ENCODE measurements at regions of chr12 and their contacts with region 1.

Region 1: GRCh38 chr12:6873094-6874014 is at the start of gene SPSB2:
- DNase-seq: peak; percentile 98
- ATAC-seq: peak; percentile 89
- H3K4me3 ChIP-seq: peak within 1 kb of the TSS; percentile 69 to 92 (median 88)
- H3K4me3 Mint-ChIP-seq: peak within 1 kb of the TSS; percentile 90
- H3K27ac ChIP-seq: peak within 1 kb of the TSS; percentile 45 to 61
- H3K27ac Mint-ChIP-seq: peak within 1 kb of the TSS; percentile 93
- H3K4me1 ChIP-seq: peaks cover 29 to 40% of the 10 kb centered on the region in 2 donors
- H3K4me1 Mint-ChIP-seq: peaks cover 40% of the 10 kb centered on the region
- H3K27me3 ChIP-seq: no peaks in the 10 kb centered on the region
- H3K27me3 Mint-ChIP-seq: no peaks in the 10 kb centered on the region
- CTCF ChIP-seq: no peak
- total RNA-seq, gene SPSB2: 13.5 and 16.0 TPM in 2 replicates

Region 2: GRCh38 chr12:6524648-6525047 is 348.7 kb before region 1 on chr12:
- CTCF ChIA-PET with region 1: no interaction called
- POLR2A ChIA-PET with region 1: no interaction called
- intact Hi-C with region 1: no loop called
- DNase-seq: no peak
- ATAC-seq: no peak
- H3K4me3 ChIP-seq: no peak overlapping the region
- H3K4me3 Mint-ChIP-seq: no peak overlapping the region
- H3K27ac ChIP-seq: no peak overlapping the region
- H3K27ac Mint-ChIP-seq: no peak overlapping the region
- H3K4me1 ChIP-seq: no peaks in the 10 kb centered on the region
- H3K4me1 Mint-ChIP-seq: no peaks in the 10 kb centered on the region
- H3K27me3 ChIP-seq: no peaks in the 10 kb centered on the region
- H3K27me3 Mint-ChIP-seq: no peaks in the 10 kb centered on the region
- CTCF ChIP-seq: no peak

Region 3: DNA sequence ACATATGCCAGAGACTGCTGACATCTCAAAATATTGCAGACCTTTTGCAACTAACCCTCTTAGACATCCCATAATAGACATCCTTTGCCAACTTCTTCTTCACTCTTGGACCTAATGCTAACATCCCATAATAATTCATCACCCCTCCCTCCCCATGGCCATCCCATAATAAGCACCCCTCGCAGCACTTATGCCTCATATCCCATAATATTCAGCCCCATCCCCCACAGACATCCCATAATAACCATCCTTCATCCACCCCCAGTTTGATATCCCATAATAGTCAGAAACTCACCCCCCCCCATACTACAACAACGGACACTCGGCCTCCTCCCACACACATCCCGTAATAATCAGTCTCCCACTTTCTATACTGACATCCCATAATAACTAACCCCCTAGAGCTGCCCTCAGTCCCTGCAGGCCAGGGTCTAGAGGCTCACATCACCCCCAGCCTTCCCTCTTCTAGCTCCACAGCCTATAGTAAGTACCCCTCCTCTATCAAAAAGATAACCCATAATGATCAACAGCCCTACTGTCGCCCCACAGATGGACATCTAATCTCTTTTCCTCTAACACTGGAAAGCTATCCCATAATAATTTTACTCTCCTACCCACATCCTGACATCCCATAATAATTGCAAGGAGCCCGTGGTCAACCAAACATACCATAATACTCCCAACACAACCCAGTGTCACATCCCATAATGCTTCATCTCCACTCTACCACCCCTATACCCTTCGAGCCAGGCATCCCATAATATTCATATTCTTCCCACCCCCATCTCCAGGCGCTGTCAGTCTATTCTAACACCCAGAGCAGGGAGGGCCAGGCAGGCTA is 265.4 kb before region 1 on chr12:
- CTCF ChIA-PET with region 1: no interaction called
- POLR2A ChIA-PET with region 1: no interaction called
- intact Hi-C with region 1: no loop called
- DNase-seq: peak; percentile 90
- ATAC-seq: peak; percentile 20
- H3K4me3 ChIP-seq: no peak overlapping the region
- H3K4me3 Mint-ChIP-seq: no peak overlapping the region
- H3K27ac ChIP-seq: peak overlapping the region; percentile 90 to 95
- H3K27ac Mint-ChIP-seq: no peak overlapping the region
- H3K4me1 ChIP-seq: peaks cover 56 to 63% of the 10 kb centered on the region in 2 donors
- H3K4me1 Mint-ChIP-seq: peaks cover 58% of the 10 kb centered on the region
- H3K27me3 ChIP-seq: no peaks in the 10 kb centered on the region
- H3K27me3 Mint-ChIP-seq: no peaks in the 10 kb centered on the region
- CTCF ChIP-seq: no peak

Region 4: DNA sequence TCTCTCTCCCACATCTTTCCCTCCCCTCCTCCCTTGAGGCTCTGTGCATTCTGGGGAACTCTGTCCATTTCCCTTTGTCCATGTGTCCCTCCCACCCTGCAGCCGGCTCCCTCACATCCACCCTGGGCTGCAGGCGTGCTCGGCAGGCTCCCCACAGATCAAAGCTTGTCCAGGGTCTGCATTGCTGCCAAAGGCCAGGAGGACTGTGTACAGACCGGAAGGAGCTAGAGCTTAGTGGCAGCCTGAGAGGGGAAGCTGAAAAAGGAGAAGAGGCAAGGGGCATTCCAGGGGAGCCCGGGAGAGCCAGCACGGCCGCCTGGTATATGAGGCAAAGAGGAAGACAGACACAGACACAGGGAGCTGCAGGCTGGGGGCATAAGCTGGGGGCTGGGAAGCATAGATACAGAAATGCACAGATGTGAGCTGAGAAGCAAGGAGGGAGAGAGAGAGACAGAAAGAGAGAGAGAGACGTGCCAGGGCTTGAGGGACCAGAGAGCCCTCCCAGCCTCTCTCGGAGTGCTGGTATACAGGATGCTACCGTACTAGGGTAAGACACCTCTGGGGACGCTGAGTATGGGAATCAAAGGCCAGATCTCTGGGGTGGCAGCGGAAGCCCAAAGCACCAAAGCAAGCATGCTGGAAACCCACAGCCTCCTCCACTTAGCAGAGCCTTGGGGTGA is 80.7 kb before region 1 on chr12:
- CTCF ChIA-PET with region 1: no interaction called
- POLR2A ChIA-PET with region 1: no interaction called
- intact Hi-C with region 1: no loop called
- DNase-seq: peak; percentile 65
- ATAC-seq: peak; percentile 49
- H3K4me3 ChIP-seq: no peak overlapping the region
- H3K4me3 Mint-ChIP-seq: peak overlapping the region; percentile 52
- H3K27ac ChIP-seq: no peak overlapping the region
- H3K27ac Mint-ChIP-seq: peak overlapping the region; percentile 64
- H3K4me1 ChIP-seq: peaks cover 13 to 19% of the 10 kb centered on the region in 2 donors
- H3K4me1 Mint-ChIP-seq: peaks cover 13% of the 10 kb centered on the region
- H3K27me3 ChIP-seq: peaks cover 0 to 42% (median 4%) of the 10 kb centered on the region in 4 experiments
- H3K27me3 Mint-ChIP-seq: peaks cover 40% of the 10 kb centered on the region
- CTCF ChIP-seq: no peak

Region 5: DNA sequence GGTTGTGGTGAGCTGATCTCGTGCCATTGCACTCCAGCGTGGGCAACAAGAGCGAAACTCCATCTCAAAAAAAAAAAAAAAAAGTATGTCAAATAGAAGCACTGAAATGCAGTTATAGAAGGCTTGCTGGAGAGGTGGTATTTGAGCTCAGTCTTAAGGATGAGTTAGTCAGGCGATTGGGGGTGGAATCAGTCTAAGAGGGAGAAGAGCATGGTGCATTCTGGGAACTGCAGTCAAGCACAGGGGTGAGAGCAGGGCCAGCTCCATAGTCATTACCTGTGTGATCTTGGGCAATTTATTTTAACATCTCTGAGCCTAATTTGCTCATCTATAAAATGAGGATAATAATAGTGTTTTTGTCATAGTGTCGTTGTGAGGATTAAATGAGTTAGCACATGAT is 38.5 kb before region 1 on chr12:
- CTCF ChIA-PET with region 1: interaction called, 16 read pairs
- POLR2A ChIA-PET with region 1: interaction called, 3 read pairs
- intact Hi-C with region 1: no loop called
- DNase-seq: no peak
- ATAC-seq: no peak
- H3K4me3 ChIP-seq: no peak overlapping the region
- H3K4me3 Mint-ChIP-seq: no peak overlapping the region
- H3K27ac ChIP-seq: no peak overlapping the region
- H3K27ac Mint-ChIP-seq: no peak overlapping the region
- H3K4me1 ChIP-seq: peaks cover 0 to 17% of the 10 kb centered on the region in 2 donors
- H3K4me1 Mint-ChIP-seq: peaks cover 12% of the 10 kb centered on the region
- H3K27me3 ChIP-seq: peaks cover 0 to 24% (median 4%) of the 10 kb centered on the region in 4 experiments
- H3K27me3 Mint-ChIP-seq: peaks cover 29% of the 10 kb centered on the region
- CTCF ChIP-seq: no peak

Region 6: GRCh38 chr12:6896846-6897435 is 23.6 kb after region 1 on chr12:
- CTCF ChIA-PET with region 1: interaction called, 77 read pairs
- POLR2A ChIA-PET with region 1: interaction called, 6 read pairs
- intact Hi-C with region 1: no loop called
- DNase-seq: no peak
- ATAC-seq: no peak
- H3K4me3 ChIP-seq: no peak overlapping the region
- H3K4me3 Mint-ChIP-seq: no peak overlapping the region
- H3K27ac ChIP-seq: no peak overlapping the region
- H3K27ac Mint-ChIP-seq: no peak overlapping the region
- H3K4me1 ChIP-seq: peaks cover 0 to 7% of the 10 kb centered on the region in 2 donors
- H3K4me1 Mint-ChIP-seq: peaks cover 6% of the 10 kb centered on the region
- H3K27me3 ChIP-seq: no peaks in the 10 kb centered on the region
- H3K27me3 Mint-ChIP-seq: no peaks in the 10 kb centered on the region
- CTCF ChIP-seq: no peak

Region 7: GRCh38 chr12:6937481-6938297 is 64.3 kb after region 1 on chr12:
- CTCF ChIA-PET with region 1: interaction called, 27 read pairs
- POLR2A ChIA-PET with region 1: interaction called, 11 read pairs
- intact Hi-C with region 1: loop called (anchors 1 kb)
- DNase-seq: peak; percentile 98
- ATAC-seq: peak; percentile 91
- H3K4me3 ChIP-seq: peak overlapping the region; percentile 28 to 94 (median 80)
- H3K4me3 Mint-ChIP-seq: peak overlapping the region; percentile 87
- H3K27ac ChIP-seq: peak overlapping the region; percentile 88 to 91
- H3K27ac Mint-ChIP-seq: peak overlapping the region; percentile 97
- H3K4me1 ChIP-seq: peaks cover 17 to 31% of the 10 kb centered on the region in 2 donors
- H3K4me1 Mint-ChIP-seq: peaks cover 37% of the 10 kb centered on the region
- H3K27me3 ChIP-seq: no peaks in the 10 kb centered on the region
- H3K27me3 Mint-ChIP-seq: no peaks in the 10 kb centered on the region
- CTCF ChIP-seq: peak; percentile 92

Region 8: GRCh38 chr12:7018350-7019042 is 145.1 kb after region 1 on chr12 and contains the start of gene LPCAT3:
- CTCF ChIA-PET with region 1: interaction called, 8 read pairs
- POLR2A ChIA-PET with region 1: no interaction called
- intact Hi-C with region 1: loop called (anchors 1 kb)
- DNase-seq: peak; percentile 98
- ATAC-seq: peak; percentile 93
- H3K4me3 ChIP-seq: peak within 1 kb of the TSS; percentile 71 to 92 (median 81)
- H3K4me3 Mint-ChIP-seq: peak within 1 kb of the TSS; percentile 88
- H3K27ac ChIP-seq: peak within 1 kb of the TSS; percentile 71 to 78
- H3K27ac Mint-ChIP-seq: peak within 1 kb of the TSS; percentile 69
- H3K4me1 ChIP-seq: peaks cover 7 to 17% of the 10 kb centered on the region in 2 donors
- H3K4me1 Mint-ChIP-seq: peaks cover 18% of the 10 kb centered on the region
- H3K27me3 ChIP-seq: no peaks in the 10 kb centered on the region
- H3K27me3 Mint-ChIP-seq: no peaks in the 10 kb centered on the region
- CTCF ChIP-seq: peak; percentile 88
- total RNA-seq, gene LPCAT3: 26.2 and 26.3 TPM in 2 replicates

Region 9: GRCh38 chr12:7129872-7130680 is 256.7 kb after region 1 on chr12 and contains the start of gene CLSTN3:
- CTCF ChIA-PET with region 1: no interaction called
- POLR2A ChIA-PET with region 1: no interaction called
- intact Hi-C with region 1: loop called (anchors 1 kb)
- DNase-seq: peak; percentile 91
- ATAC-seq: peak; percentile 90
- H3K4me3 ChIP-seq: peak within 1 kb of the TSS; percentile 53 to 92 (median 75)
- H3K4me3 Mint-ChIP-seq: peak within 1 kb of the TSS; percentile 98
- H3K27ac ChIP-seq: peak within 1 kb of the TSS; percentile 10 to 54
- H3K27ac Mint-ChIP-seq: peak within 1 kb of the TSS; percentile 87
- H3K4me1 ChIP-seq: peaks cover 16 to 26% of the 10 kb centered on the region in 2 donors
- H3K4me1 Mint-ChIP-seq: peaks cover 30% of the 10 kb centered on the region
- H3K27me3 ChIP-seq: no peaks in the 10 kb centered on the region
- H3K27me3 Mint-ChIP-seq: no peaks in the 10 kb centered on the region
- CTCF ChIP-seq: no peak
- total RNA-seq, gene CLSTN3: 36.5 and 41.2 TPM in 2 replicates

Measured in B cell (primary cell).